OCI-LY7 (cell line): ENCODE measurements at regions of chr9 and their contacts with region 1.

Region 1: DNA sequence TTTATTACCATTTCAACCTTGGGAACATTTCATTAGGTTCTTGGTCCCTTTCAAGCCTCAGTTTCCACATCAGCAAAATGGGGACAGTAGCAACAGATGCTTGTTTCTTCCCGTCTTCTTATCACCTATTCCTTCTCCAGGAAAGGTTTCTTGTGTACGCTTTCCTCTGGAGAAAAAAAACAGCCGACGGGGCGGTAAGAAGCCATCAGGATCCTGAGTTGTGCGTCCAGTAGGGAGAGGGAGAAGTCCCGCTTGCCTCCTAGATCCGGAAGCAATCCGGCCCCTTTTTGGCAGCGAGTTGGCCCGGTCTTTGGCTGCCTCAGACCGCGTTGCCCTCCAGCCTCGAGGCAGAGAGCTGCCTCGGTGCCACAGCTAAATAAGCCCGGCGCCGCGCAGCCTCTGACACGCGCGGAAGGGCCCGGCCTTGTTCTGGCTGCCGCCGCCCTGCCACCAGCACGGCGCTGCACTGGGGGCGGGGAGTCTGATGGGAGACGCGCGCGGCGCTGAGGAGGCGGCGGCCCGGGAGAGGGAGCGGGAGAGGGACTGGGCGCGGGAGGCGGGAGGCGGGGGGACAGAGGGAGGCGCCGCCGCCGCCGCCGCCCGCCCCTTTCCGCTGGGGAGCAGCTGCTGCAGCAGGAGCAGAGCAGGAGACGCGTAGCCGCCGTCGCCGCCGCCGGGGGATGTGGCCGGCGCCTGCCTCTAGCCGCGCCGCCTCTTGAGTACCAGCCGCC is at the start of gene SLC44A1:
- DNase-seq: peak; percentile 94
- H3K4me3 ChIP-seq: peak within 1 kb of the TSS; percentile 93
- H3K27ac ChIP-seq: peak within 1 kb of the TSS; percentile 62
- H3K4me1 ChIP-seq: peaks cover 44% of the 10 kb centered on the region
- CTCF ChIP-seq: no peak
- total RNA-seq, gene SLC44A1: 26.6 and 27.6 TPM in 2 replicates

Region 2: GRCh38 chr9:104774831-104775573 is 469.2 kb before region 1 on chr9:
- CTCF ChIA-PET with region 1: no interaction called
- POLR2A ChIA-PET with region 1: interaction called, 3 read pairs
- intact Hi-C with region 1: loop called (anchors 10 kb)
- DNase-seq: peak; percentile 59
- H3K4me3 ChIP-seq: peak overlapping the region; percentile 64
- H3K27ac ChIP-seq: peak overlapping the region; percentile 22
- H3K4me1 ChIP-seq: peaks cover 69% of the 10 kb centered on the region
- CTCF ChIP-seq: no peak

Region 3: DNA sequence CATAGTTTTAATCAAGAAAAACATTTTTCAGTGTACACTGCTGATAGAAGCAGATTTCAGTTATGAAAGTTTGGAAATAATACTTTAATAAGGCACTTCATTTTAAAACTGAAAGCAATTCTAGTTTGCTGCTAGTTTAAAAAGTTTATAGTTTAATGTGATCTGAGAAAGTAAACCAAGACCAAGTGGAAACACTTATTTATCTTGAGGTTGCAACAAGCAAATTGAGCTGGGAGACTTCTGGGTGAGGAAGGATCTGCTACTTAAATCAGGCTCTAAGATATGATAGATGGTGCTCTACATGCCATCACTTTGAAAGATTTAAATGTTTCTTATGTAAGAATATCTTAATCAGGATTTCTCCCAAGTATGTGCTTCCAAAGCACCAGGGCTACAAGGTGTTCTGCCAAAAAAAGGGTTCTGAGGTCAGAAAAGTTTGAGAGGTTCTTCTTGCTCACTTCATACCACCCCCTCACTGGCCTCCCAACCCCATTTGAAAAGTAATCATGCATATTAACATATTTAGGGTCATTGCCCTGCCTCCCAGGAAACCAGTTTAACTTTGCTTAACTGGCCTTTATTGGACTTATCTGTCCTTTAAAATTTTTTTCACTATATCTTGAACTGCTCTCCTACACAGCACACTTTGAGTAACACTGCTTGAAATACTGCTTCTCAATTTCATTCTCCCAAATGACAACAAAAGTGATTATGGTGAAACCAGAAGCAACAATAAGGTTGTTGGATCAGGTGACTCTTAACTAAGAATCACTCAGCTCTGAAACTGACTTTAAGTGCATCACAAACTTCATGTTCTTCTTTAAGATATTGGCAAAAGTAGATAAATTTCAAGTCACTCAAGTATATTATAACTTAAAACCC is 15.8 kb after region 1 on chr9:
- CTCF ChIA-PET with region 1: interaction called, 4 read pairs
- POLR2A ChIA-PET with region 1: interaction called, 32 read pairs
- intact Hi-C with region 1: no loop called
- DNase-seq: peak; percentile 33
- H3K4me3 ChIP-seq: peak overlapping the region; percentile 30
- H3K27ac ChIP-seq: peak overlapping the region; percentile 81
- H3K4me1 ChIP-seq: peaks cover 64% of the 10 kb centered on the region
- CTCF ChIP-seq: no peak

Region 4: DNA sequence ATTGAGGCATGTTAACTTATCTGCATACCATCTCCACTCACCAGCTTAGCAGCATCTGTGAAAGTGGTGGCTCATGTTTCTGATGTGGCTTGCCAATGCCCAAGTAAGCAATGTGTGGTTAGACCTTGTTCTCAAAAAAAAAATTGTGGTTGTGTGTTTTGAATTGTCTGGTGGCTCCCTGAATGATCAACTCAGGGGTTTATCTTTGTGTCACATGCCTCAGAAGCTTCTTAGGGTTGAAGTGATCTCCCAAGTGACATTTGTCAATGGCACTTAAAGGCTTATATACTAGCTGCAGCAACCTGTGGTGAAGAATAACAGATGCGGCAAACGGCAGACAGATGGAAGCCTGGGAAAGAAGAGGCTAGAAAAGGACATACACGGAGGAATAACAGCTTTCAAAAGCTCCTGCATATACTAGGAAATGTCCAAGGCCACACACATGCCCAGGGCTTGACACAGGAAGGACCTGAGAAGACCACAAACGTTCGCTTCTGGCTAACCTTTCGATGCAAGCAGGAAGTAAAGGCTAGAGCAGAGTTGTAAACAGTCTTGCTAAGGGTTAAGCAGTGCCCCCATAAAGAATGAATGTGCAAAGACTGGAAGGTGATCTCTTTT is 161.5 kb after region 1 on chr9:
- CTCF ChIA-PET with region 1: interaction called, 3 read pairs
- POLR2A ChIA-PET with region 1: interaction called, 10 read pairs
- intact Hi-C with region 1: no loop called
- DNase-seq: peak; percentile 71
- H3K4me3 ChIP-seq: peak overlapping the region; percentile 29
- H3K27ac ChIP-seq: peak overlapping the region; percentile 85
- H3K4me1 ChIP-seq: peaks cover 56% of the 10 kb centered on the region
- CTCF ChIP-seq: no peak

Region 5: DNA sequence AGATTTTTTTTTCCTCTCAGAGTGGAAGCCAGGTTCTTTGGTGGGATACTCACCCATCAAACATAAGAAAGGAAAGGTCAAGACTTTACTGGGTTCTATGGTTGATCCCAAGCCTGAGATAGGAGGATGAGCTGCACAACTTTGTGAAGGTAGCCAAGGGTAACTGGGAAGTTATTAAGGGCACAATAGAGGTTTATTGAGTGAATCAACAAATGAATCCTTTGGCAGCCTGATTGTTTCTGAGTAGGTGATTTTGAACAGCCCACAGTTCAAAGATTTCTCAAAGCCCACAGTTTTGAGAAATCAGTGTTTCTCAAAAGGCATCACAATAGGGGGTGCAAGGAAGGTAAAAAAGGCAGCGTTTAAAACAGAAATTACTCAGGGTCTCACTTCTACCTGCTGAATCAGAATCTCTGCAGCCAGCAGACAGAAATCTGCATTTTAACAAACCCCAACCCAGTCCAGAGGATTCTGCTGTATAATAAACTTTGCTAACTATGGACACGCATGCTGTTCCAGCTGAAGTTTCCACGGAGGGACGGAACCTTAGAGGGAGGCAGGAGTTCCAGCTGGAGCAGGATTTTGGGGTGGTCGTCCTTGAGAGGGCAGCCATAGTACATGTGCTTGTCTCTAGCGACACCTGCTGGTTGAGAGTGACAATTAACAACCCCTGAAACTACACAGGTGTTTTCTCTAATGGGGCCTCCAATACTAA is 170.9 kb after region 1 on chr9:
- CTCF ChIA-PET with region 1: no interaction called
- POLR2A ChIA-PET with region 1: interaction called, 4 read pairs
- intact Hi-C with region 1: loop called (anchors 2 kb)
- DNase-seq: peak; percentile 78
- H3K4me3 ChIP-seq: no peak overlapping the region
- H3K27ac ChIP-seq: no peak overlapping the region
- H3K4me1 ChIP-seq: peaks cover 4% of the 10 kb centered on the region
- CTCF ChIP-seq: peak; percentile 99